GM10248 (cell line): ENCODE measurements at regions of chr11 and their contacts with region 1.

Region 1: DNA sequence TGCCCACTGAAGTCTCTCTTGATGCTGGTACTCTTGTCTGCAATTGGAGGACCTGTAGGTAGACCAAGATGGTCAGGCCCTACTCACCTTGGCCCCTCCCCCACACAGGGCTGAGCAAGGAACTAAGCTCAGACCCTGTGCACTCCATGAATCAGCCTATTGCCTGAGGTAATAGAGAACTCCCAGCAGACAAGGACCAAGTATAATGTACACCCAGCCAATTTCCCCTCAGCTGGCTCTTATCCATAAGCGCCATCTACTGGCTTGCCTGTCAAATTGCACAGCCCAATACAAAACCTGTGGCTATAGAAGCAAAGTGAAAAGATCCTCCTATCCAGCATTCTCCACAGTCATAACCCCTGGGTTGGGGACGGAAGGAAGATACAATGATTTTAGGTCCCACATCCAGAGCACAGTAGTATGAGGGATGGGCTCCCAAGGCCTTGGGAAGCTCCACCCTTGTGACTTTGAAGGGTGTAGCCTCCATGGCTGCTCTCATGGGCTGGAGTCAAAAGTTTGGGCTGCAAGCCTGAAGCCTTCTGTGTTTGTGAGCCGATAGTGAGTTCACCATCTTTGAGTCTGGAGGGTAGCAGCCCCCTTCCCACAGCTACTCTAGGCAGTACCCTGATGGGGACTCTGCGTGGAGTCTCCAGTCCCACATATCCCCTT is 56.0 kb downstream of the GLYATL2 start:
- DNase-seq: peak; percentile 44
- CTCF ChIP-seq: peak; percentile 87

Region 2: GRCh38 chr11:58524232-58525036 is 264.1 kb before region 1 on chr11:
- CTCF ChIA-PET with region 1: interaction called, 11 read pairs
- POLR2A ChIA-PET with region 1: no interaction called
- DNase-seq: peak; percentile 24
- CTCF ChIP-seq: peak; percentile 67

Region 3: DNA sequence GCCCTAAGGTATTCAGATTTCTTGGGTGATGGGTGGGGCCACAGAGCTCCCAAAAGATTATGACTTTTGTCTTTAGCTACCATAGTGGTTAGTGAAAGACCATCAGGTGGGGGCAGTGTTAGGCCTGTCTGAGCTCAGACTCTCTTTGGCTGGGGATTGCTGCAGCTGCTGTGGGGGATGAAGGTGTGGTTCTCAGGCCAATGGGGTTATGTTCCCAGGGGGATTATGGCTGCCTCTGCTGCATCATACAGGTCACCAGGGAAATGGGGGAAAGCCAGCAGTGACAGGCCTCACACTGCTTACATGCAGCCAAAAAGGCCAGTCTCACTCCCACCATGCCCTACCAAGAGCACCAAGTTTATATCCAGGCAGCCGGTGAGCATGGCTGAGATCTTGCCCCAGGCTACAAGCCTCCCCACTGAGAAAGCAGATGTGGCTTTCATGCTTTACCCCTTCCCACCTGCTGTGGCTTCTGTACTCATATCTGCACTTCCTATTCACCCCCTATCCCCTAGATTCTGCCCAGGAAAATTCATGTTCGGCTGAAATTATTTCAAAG is 141.3 kb before region 1 on chr11:
- CTCF ChIA-PET with region 1: interaction called, 10 read pairs
- POLR2A ChIA-PET with region 1: no interaction called
- DNase-seq: no peak
- CTCF ChIP-seq: peak; percentile 17

Region 4: DNA sequence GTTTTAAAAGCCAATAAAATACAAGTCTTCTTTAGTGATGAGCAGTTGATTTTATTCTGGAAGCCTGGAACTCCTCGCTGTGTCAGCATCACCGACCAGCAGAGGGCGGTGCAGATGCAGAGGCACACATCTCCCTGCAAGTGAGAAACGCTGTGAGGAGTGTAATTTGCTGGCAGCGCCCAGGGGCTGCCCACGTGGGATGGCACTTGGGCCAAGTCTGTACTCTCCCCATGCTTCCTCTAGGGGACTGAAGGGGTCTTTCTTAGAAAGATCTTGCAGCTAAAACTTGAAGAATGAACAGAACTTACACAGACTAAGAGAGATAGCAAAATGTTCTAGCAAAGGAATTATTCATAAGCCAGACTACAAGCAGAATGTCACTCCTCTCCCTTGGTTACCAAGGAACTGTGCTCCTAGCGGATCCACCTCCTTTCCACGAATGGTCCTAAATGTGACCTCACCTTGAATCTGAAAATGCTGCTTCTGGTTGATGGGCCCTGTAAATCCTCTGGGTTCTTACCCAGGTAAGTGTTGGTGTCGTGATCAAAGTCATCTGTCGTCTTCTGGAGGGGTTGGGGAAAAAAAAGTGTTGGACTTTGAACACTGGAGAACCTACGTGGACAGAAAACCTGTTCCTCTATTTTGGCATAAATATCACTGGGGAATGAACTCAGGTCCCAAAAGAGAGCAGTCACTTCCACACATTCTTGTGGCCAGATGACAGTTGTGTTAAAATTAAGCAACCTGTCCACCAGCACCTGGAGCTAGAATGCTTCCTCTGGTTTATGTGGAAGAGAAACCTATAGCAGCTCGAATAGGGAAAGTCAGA is 134.2 kb before region 1 on chr11:
- CTCF ChIA-PET with region 1: interaction called, 19 read pairs
- POLR2A ChIA-PET with region 1: no interaction called
- DNase-seq: peak; percentile 69
- CTCF ChIP-seq: peak; percentile 93

Region 5: GRCh38 chr11:58675334-58676155 is 112.9 kb before region 1 on chr11:
- CTCF ChIA-PET with region 1: interaction called, 11 read pairs
- POLR2A ChIA-PET with region 1: no interaction called
- DNase-seq: peak; percentile 80
- CTCF ChIP-seq: peak; percentile 95

Region 6: DNA sequence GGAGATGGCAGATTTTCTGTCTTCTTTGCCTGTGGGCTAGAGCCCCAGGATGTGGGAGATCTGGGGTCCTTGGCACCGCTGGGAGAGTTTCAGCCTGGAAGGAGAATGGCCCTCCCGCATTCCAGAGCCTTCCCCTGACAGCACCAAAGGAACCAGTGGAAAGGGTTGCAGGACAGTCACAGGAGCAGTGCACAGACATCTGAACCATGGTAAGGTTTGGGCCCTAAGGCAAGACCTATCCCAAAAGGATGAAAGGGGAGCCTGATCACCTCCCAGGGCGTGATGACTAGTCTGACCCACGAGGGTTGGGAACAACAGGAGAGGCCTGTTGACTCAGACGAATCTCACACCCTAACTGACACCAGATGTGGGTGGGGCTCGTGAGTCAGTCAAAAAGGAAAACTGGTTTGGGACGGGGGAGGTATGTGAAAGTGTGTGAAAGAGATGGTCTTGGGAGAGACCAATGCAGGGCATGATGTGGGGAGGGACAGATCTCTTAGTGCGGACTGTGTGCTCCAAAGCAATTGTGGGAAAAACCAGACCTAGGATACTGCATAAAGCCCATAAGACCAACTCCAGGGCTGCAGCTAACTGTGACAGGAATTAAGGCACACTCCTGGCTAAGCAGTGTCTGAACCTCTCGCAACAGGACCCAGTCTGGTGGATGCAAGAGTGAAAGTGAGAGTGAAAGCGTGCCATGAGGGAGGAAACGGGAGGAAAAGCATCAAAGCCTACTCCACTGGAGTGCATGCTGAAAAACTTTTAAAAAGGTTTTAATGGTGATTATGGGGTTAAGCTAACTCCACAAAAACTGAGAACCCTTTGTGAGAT is 17.6 kb before region 1 on chr11:
- CTCF ChIA-PET with region 1: interaction called, 14 read pairs
- POLR2A ChIA-PET with region 1: no interaction called
- DNase-seq: no peak
- CTCF ChIP-seq: no peak

Region 7: GRCh38 chr11:58776891-58777710 is 11.4 kb before region 1 on chr11:
- CTCF ChIA-PET with region 1: interaction called, 14 read pairs
- POLR2A ChIA-PET with region 1: no interaction called
- DNase-seq: no peak
- CTCF ChIP-seq: no peak

Region 8: DNA sequence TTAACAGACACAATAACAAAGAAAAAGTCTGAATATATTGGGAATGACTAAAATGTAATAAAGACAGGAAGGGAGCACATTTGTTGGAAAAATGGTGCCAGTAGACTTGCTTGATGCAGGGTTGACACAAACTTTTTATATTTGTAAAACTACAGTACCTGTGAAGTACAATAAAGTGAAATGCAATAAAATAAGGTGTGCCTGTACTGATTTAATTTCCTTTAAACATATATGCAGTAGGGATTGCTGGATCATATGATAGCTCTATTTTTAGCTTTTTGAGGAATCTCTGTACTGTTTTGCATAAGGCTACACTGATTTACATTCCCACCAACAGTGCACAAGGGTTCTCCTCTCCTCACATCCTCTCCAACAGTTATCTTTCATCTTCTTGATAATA is 68.3 kb after region 1 on chr11:
- CTCF ChIA-PET with region 1: no interaction called
- POLR2A ChIA-PET with region 1: no interaction called
- DNase-seq: no peak
- CTCF ChIP-seq: no peak